HepG2 (cell line): ENCODE measurements at regions of chr17 and their contacts with region 1.

Region 1: DNA sequence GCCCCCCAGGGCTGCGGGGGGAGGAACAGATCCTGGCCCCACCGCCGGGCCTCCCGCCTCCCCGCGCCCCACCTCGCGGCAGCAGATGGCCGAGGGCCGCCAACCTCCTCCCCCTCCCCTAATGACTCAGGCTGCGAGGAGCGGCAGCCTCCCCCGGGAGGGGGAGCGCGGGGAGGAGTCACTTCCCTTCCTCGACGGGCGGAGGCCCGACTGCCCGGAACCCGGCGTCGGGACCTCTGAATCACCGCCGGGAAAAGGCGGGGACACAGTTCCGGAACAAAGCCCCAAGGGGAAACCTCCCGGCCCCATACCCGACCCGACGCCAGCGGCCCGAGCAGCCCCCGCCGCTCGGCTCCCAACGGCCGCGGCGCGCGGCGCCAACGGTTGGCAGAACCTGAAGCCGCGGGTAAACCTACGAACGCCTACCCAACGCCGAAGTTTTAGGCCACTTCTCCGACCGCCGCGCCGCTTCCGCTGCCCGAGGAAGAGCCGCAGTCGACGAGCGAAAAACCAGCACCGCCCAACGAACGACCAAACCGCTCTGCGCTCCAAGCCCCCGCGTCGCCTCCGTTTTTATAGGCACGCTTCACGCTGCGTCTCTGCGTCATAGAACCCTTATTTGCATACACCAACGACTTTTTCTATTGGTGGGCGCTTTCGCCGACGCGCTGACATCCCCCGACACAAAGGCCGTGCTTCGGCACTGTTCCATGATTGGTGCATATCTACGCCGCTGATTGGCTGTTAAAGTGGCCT is 5.2 kb upstream of the UNK start:
- DNase-seq: peak; percentile 100
- ATAC-seq: peak; percentile 81
- H3K4me3 ChIP-seq: peak overlapping the region; percentile 73 to 92 (median 86)
- H3K27ac ChIP-seq: peak overlapping the region; percentile 91
- H3K4me1 ChIP-seq: peaks cover 58% of the 10 kb centered on the region
- H3K27me3 ChIP-seq: no peaks in the 10 kb centered on the region; a peak in 1 of 5 replicates
- CTCF ChIP-seq: no peak
- EP300 ChIP-seq: peak in 1 of 2 experiments; percentile 12; a peak in 1 of 4 replicates
- POLR2A ChIP-seq: peak; percentile 100
- RAD21 ChIP-seq: peak; percentile 80

Region 2: GRCh38 chr17:74646231-74646630 is 1133.2 kb before region 1 on chr17:
- CTCF ChIA-PET with region 1: no interaction called
- POLR2A ChIA-PET with region 1: no interaction called
- in situ Hi-C with region 1: no loop called
- intact Hi-C with region 1: no loop called
- DNase-seq: peak; percentile 13
- ATAC-seq: no peak
- H3K4me3 ChIP-seq: no peak overlapping the region
- H3K27ac ChIP-seq: no peak overlapping the region
- H3K4me1 ChIP-seq: no peaks in the 10 kb centered on the region
- H3K27me3 ChIP-seq: peaks cover 8 to 54% of the 10 kb centered on the region in 2 experiments; a peak in 4 of 5 replicates
- CTCF ChIP-seq: peak; percentile 23; the same call in 1 of the 2 replicates
- EP300 ChIP-seq: no peak
- POLR2A ChIP-seq: no peak
- RAD21 ChIP-seq: no peak

Region 3: DNA sequence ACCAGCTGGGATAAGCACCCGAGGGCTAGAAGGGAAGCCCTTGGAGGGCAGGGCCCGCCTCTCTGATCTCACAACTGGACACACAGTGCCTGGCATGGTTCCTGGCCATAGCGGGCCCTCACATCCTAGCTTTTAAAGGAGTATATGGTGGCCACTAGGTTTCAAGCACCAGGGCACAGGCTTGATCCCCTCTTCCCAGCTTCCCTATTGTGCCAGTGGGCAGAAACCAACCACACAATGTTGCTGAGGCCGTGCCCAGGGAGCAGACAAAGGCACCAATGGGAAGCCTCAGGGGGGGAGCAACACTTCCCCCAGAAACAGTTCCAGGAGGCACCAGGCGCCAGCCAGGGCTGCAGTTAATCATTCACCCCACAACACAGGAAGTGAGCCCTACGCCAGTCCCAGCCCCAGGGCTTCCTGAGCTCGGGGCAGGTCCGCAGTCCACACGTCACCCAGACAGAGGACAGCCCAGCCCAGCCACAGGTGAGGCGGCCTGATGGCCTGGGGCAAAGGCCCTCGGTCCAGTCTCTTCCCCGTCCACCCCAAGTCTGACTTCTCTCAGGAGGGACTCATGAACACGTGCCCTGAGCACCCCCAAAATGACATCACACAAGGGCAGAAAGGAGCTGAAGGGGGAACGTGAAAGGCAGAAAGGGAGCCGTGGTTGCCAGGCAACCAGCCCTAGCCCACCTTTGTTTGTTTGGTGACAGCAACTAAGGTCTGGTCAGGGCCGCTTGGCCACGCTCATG is 133.3 kb before region 1 on chr17:
- CTCF ChIA-PET with region 1: no interaction called
- POLR2A ChIA-PET with region 1: interaction called, 18 read pairs
- in situ Hi-C with region 1: no loop called
- intact Hi-C with region 1: no loop called
- DNase-seq: peak; percentile 96
- ATAC-seq: peak; percentile 100
- H3K4me3 ChIP-seq: peak overlapping the region; percentile 45 to 67 (median 48); a peak in 5 of 6 replicates
- H3K27ac ChIP-seq: peak overlapping the region; percentile 85
- H3K4me1 ChIP-seq: peaks cover 25% of the 10 kb centered on the region
- H3K27me3 ChIP-seq: no peaks in the 10 kb centered on the region
- CTCF ChIP-seq: peak; percentile 52
- EP300 ChIP-seq: no peak
- POLR2A ChIP-seq: peak; percentile 90 to 93
- RAD21 ChIP-seq: no peak

Region 4: GRCh38 chr17:75764711-75765421 is 14.5 kb before region 1 on chr17 and contains the start of gene GALK1:
- CTCF ChIA-PET with region 1: no interaction called
- POLR2A ChIA-PET with region 1: interaction called, 390 read pairs
- in situ Hi-C with region 1: no loop called
- intact Hi-C with region 1: loop called (anchors 2 kb)
- DNase-seq: peak; percentile 59
- ATAC-seq: peak; percentile 73
- H3K4me3 ChIP-seq: peak within 1 kb of the TSS; percentile 77 to 87 (median 78)
- H3K27ac ChIP-seq: peak within 1 kb of the TSS; percentile 79
- H3K4me1 ChIP-seq: peaks cover 60% of the 10 kb centered on the region
- H3K27me3 ChIP-seq: no peaks in the 10 kb centered on the region
- CTCF ChIP-seq: peak; percentile 78
- EP300 ChIP-seq: no peak
- POLR2A ChIP-seq: peak in 1 of 2 experiments; percentile 73; a peak in 2 of 4 replicates
- RAD21 ChIP-seq: peak; percentile 46
- total RNA-seq, gene GALK1: 93.6 and 95.6 TPM in 2 replicates

Region 5: DNA sequence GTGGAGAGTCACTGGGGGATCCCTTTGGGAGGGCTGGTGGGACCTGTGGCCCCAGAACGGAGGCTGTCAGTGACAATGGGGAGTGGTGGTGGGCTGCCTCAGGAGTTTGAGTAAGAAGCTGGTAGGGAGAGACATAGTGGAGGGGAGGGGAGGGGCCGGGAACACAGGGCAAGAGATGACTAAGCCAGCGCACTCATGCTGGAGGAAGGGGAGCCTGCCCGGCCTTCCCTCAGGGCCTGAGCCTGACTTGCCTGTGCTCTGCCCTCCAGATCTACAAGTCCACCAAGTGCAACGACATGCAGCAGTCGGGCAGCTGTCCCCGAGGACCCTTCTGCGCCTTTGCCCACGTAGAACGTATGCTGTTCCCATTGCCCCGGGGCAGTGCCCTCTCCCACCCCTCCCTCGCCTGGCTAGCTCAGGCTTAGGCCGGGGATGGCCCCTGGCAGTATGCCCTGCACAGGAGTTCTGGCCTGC is 35.5 kb after region 1 on chr17:
- CTCF ChIA-PET with region 1: no interaction called
- POLR2A ChIA-PET with region 1: interaction called, 20 read pairs
- in situ Hi-C with region 1: no loop called
- intact Hi-C with region 1: no loop called
- DNase-seq: no peak
- ATAC-seq: no peak
- H3K4me3 ChIP-seq: no peak overlapping the region
- H3K27ac ChIP-seq: no peak overlapping the region
- H3K4me1 ChIP-seq: no peaks in the 10 kb centered on the region
- H3K27me3 ChIP-seq: no peaks in the 10 kb centered on the region
- CTCF ChIP-seq: no peak
- EP300 ChIP-seq: no peak
- POLR2A ChIP-seq: no peak
- RAD21 ChIP-seq: no peak

Region 6: GRCh38 chr17:75845049-75845860 is 65.8 kb after region 1 on chr17:
- CTCF ChIA-PET with region 1: no interaction called
- POLR2A ChIA-PET with region 1: interaction called, 132 read pairs
- in situ Hi-C with region 1: no loop called
- intact Hi-C with region 1: loop called (anchors 2 kb)
- DNase-seq: peak; percentile 86
- ATAC-seq: peak; percentile 65
- H3K4me3 ChIP-seq: peak overlapping the region; percentile 66 to 84 (median 66)
- H3K27ac ChIP-seq: peak overlapping the region; percentile 79
- H3K4me1 ChIP-seq: peaks cover 70% of the 10 kb centered on the region
- H3K27me3 ChIP-seq: no peaks in the 10 kb centered on the region
- CTCF ChIP-seq: peak; percentile 90
- EP300 ChIP-seq: peak in 1 of 2 experiments; percentile 31; a peak in 1 of 4 replicates
- POLR2A ChIP-seq: peak in 1 of 2 experiments; percentile 67; a peak in 2 of 4 replicates
- RAD21 ChIP-seq: peak; percentile 82

Region 7: GRCh38 chr17:75877752-75878173 is 98.4 kb after region 1 on chr17:
- CTCF ChIA-PET with region 1: no interaction called
- POLR2A ChIA-PET with region 1: interaction called, 81 read pairs
- in situ Hi-C with region 1: no loop called
- intact Hi-C with region 1: no loop called
- DNase-seq: peak; percentile 68
- ATAC-seq: peak; percentile 54
- H3K4me3 ChIP-seq: peak overlapping the region; percentile 71 to 84 (median 84)
- H3K27ac ChIP-seq: peak overlapping the region; percentile 99
- H3K4me1 ChIP-seq: peaks cover 46% of the 10 kb centered on the region
- H3K27me3 ChIP-seq: no peaks in the 10 kb centered on the region
- CTCF ChIP-seq: peak; percentile 59; the same call in 1 of the 2 replicates
- EP300 ChIP-seq: 0 out of 4 replicates have a peak, but pooled peaks of 1 of the 2 experiments have one; percentile 22
- POLR2A ChIP-seq: no peak; a peak in 1 of 4 replicates
- RAD21 ChIP-seq: peak; percentile 90

Region 8: DNA sequence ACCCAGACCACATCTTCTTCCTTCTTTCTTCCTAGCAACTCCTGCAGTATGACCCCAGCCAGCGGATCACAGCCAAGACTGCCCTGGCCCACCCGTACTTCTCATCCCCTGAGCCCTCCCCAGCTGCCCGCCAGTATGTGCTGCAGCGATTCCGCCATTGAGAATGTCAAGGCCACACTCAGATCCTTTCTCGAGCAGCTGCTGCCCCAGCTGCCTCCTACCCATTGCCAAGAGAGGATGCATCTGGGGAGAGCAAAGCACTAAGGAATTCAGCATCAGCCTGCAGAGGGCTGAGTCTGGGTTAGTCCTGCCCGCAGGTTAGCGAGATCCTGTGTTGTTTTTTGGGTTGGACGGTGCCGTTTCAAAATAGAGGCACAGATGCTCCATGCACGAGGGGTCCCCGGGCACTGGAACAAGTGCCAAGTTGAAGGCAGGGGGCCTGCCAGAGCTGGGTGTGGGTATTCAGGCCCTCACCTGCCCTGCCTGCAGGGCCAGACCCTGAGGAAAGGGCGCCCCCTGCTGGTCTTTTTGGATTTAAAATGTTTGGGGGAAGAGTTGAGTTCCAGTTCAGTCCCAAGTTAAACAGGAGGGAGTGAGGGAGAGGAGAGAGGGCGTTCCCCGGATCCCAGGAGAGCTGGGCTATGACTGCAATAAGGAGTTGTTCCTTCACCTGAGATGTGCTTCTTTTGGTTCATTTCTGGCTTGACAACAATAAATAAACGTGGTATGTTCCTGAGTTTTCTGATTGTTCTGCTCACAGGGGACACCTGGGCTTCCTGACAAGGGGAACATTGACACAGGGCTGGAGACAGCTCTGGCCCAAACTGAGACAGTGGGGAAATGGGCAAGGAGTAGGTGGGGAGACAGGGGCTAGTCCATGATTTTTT is 226.1 kb after region 1 on chr17:
- CTCF ChIA-PET with region 1: no interaction called
- POLR2A ChIA-PET with region 1: interaction called, 15 read pairs
- in situ Hi-C with region 1: no loop called
- intact Hi-C with region 1: no loop called
- DNase-seq: peak; percentile 82
- ATAC-seq: peak; percentile 42
- H3K4me3 ChIP-seq: no peak overlapping the region
- H3K27ac ChIP-seq: peak overlapping the region; percentile 83
- H3K4me1 ChIP-seq: peaks cover 55% of the 10 kb centered on the region
- H3K27me3 ChIP-seq: no peaks in the 10 kb centered on the region
- CTCF ChIP-seq: peak; percentile 96
- EP300 ChIP-seq: no peak
- POLR2A ChIP-seq: no peak
- RAD21 ChIP-seq: peak; percentile 97